ENCODE measurements at regions of chr5 and their contacts with region 1.

Region 1: GRCh38 chr5:108753877-108754276 is 6.2 kb downstream of the FER start:
- DNase-seq: peak; percentile 90
- ATAC-seq: peak; percentile 62
- H3K4me3 ChIP-seq: peak overlapping the region; percentile 48
- H3K27ac ChIP-seq: peak overlapping the region; percentile 44
- H3K4me1 ChIP-seq: peaks cover 37% of the 10 kb centered on the region
- H3K27me3 ChIP-seq: no peaks in the 10 kb centered on the region
- CTCF ChIP-seq: no peak

Region 2: DNA sequence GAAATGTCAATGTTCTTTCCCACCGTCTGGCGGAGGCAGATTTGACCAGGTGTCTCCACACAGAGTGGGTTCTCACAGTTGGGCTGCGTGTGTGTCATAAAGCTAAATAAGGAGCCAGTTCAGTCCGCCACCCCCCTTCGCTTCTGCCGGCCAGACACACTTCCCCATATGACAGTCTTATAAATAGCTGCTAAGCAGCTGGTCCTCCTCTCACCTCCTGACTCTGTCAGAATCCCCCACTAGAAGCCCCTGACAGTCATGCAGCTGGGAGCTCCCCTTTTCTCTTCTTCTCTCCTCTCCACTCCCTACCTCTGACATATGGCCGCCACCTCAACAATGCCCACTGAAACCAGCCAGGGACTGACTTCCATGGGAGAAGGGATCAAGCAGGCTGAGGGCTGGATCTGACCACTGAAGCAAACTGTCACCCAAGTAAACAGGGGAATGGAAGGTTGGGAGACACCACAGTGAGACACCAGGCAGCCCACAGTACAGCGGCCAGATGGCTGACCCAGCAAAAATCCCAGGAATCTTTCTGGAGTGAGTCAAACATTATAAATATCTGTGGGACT is 941.2 kb before region 1 on chr5:
- CTCF ChIA-PET with region 1: no interaction called
- POLR2A ChIA-PET with region 1: no interaction called
- intact Hi-C with region 1: no loop called
- DNase-seq: peak; percentile 38
- ATAC-seq: 0 out of 2 replicates have a peak, but pooled peaks have one; percentile 34
- H3K4me3 ChIP-seq: no peak overlapping the region
- H3K27ac ChIP-seq: no peak overlapping the region
- H3K4me1 ChIP-seq: peaks cover 9% of the 10 kb centered on the region
- H3K27me3 ChIP-seq: no peaks in the 10 kb centered on the region
- CTCF ChIP-seq: no peak

Region 3: GRCh38 chr5:108642167-108642906 is 111.5 kb before region 1 on chr5:
- CTCF ChIA-PET with region 1: no interaction called
- POLR2A ChIA-PET with region 1: no interaction called
- intact Hi-C with region 1: loop called (anchors 5 kb)
- DNase-seq: peak; percentile 82
- ATAC-seq: peak; percentile 97
- H3K4me3 ChIP-seq: no peak overlapping the region; the same call in 1 of the 2 replicates
- H3K27ac ChIP-seq: no peak overlapping the region
- H3K4me1 ChIP-seq: 0 out of 2 replicates have a peak, but pooled peaks cover under 1% of the 10 kb centered on the region
- H3K27me3 ChIP-seq: no peaks in the 10 kb centered on the region
- CTCF ChIP-seq: peak; percentile 88

Region 4: GRCh38 chr5:108655750-108656450 is 98.0 kb before region 1 on chr5:
- CTCF ChIA-PET with region 1: no interaction called
- POLR2A ChIA-PET with region 1: no interaction called
- intact Hi-C with region 1: no loop called
- DNase-seq: peak; percentile 87
- ATAC-seq: peak; percentile 96
- H3K4me3 ChIP-seq: no peak overlapping the region; the same call in 1 of the 2 replicates
- H3K27ac ChIP-seq: peak overlapping the region; percentile 32
- H3K4me1 ChIP-seq: peaks cover 22% of the 10 kb centered on the region
- H3K27me3 ChIP-seq: no peaks in the 10 kb centered on the region
- CTCF ChIP-seq: no peak

Region 5: DNA sequence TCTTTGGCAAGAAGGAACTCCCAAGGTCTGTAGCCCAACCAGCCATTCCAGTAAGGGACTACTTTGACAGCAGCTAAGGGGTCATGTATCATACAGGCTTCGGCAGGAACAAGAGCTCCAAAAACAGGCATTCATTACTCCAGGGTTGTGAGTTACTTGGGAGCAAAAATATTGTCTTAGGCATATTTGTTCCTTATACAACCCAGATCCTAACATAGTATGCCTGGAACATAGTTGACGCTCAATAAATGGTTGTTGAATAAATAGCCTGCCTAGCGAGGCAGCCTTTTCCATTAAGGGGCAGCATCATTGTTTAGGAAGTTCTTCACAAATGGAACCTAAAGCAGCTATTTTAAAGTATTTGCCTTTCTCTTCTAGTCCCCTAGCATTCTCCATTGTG is 42.0 kb before region 1 on chr5:
- CTCF ChIA-PET with region 1: no interaction called
- POLR2A ChIA-PET with region 1: no interaction called
- intact Hi-C with region 1: no loop called
- DNase-seq: no peak
- ATAC-seq: no peak
- H3K4me3 ChIP-seq: no peak overlapping the region
- H3K27ac ChIP-seq: no peak overlapping the region
- H3K4me1 ChIP-seq: no peaks in the 10 kb centered on the region
- H3K27me3 ChIP-seq: no peaks in the 10 kb centered on the region
- CTCF ChIP-seq: no peak

Region 6: GRCh38 chr5:108769352-108769751 is 15.5 kb after region 1 on chr5:
- CTCF ChIA-PET with region 1: no interaction called
- POLR2A ChIA-PET with region 1: interaction called, 4 read pairs
- intact Hi-C with region 1: loop called (anchors 2 kb)
- DNase-seq: no peak
- ATAC-seq: no peak
- H3K4me3 ChIP-seq: no peak overlapping the region
- H3K27ac ChIP-seq: no peak overlapping the region
- H3K4me1 ChIP-seq: 0 out of 2 replicates have a peak, but pooled peaks cover 6% of the 10 kb centered on the region
- H3K27me3 ChIP-seq: no peaks in the 10 kb centered on the region
- CTCF ChIP-seq: no peak

Region 7: GRCh38 chr5:108793207-108793606 is 39.3 kb after region 1 on chr5:
- CTCF ChIA-PET with region 1: no interaction called
- POLR2A ChIA-PET with region 1: interaction called, 3 read pairs
- intact Hi-C with region 1: loop called (anchors 5 kb)
- DNase-seq: no peak
- ATAC-seq: no peak
- H3K4me3 ChIP-seq: no peak overlapping the region
- H3K27ac ChIP-seq: no peak overlapping the region
- H3K4me1 ChIP-seq: peaks cover 19% of the 10 kb centered on the region
- H3K27me3 ChIP-seq: no peaks in the 10 kb centered on the region
- CTCF ChIP-seq: no peak